ENCODE measurements at regions of chr13 and their contacts with region 1.

Region 1: DNA sequence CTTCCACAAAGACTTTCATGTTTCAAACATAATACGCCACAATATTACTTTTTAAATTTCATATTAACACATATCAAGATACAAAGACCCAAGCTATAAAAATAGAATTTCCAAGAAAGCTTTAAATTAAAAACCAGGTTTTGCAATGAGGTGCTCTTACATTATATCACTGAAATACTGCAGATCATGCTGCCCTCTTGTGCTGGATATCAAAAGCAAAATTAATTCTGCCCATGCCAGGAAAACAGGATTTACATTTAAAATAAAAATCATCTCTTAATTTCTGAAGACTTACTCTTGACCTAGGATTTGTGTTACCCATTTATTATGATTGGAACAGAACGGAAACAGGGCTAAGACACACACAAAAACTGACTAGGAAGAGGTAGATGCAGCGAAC is 145.0 kb downstream of the ABCC4 start:
- DNase-seq: peak; percentile 56
- ATAC-seq: no peak
- H3K4me3 ChIP-seq: no peak overlapping the region
- H3K27ac ChIP-seq: peak overlapping the region; percentile 98
- H3K4me1 ChIP-seq: peaks cover 33% of the 10 kb centered on the region
- H3K27me3 ChIP-seq: no peaks in the 10 kb centered on the region
- CTCF ChIP-seq: peak; percentile 75

Region 2: GRCh38 chr13:94660695-94661326 is 495.4 kb before region 1 on chr13:
- CTCF ChIA-PET with region 1: interaction called, 12 read pairs
- POLR2A ChIA-PET with region 1: no interaction called
- intact Hi-C with region 1: no loop called
- DNase-seq: peak; percentile 51
- ATAC-seq: no peak
- H3K4me3 ChIP-seq: no peak overlapping the region
- H3K27ac ChIP-seq: no peak overlapping the region
- H3K4me1 ChIP-seq: peaks cover 34% of the 10 kb centered on the region
- H3K27me3 ChIP-seq: no peaks in the 10 kb centered on the region
- CTCF ChIP-seq: peak; percentile 65

Region 3: GRCh38 chr13:94784066-94784465 is 372.1 kb before region 1 on chr13:
- CTCF ChIA-PET with region 1: no interaction called
- POLR2A ChIA-PET with region 1: interaction called, 3 read pairs
- intact Hi-C with region 1: loop called (anchors 10 kb)
- DNase-seq: no peak
- ATAC-seq: no peak
- H3K4me3 ChIP-seq: no peak overlapping the region
- H3K27ac ChIP-seq: no peak overlapping the region
- H3K4me1 ChIP-seq: peaks cover 26% of the 10 kb centered on the region
- H3K27me3 ChIP-seq: no peaks in the 10 kb centered on the region
- CTCF ChIP-seq: no peak

Region 4: GRCh38 chr13:95003019-95003813 is 153.0 kb before region 1 on chr13:
- CTCF ChIA-PET with region 1: no interaction called
- POLR2A ChIA-PET with region 1: no interaction called
- intact Hi-C with region 1: loop called (anchors 1 kb)
- DNase-seq: no peak
- ATAC-seq: no peak; the same call in 1 of the 2 replicates
- H3K4me3 ChIP-seq: no peak overlapping the region
- H3K27ac ChIP-seq: no peak overlapping the region
- H3K4me1 ChIP-seq: peaks cover 5% of the 10 kb centered on the region; the same call in 1 of the 2 replicates
- H3K27me3 ChIP-seq: no peaks in the 10 kb centered on the region
- CTCF ChIP-seq: no peak

Region 5: DNA sequence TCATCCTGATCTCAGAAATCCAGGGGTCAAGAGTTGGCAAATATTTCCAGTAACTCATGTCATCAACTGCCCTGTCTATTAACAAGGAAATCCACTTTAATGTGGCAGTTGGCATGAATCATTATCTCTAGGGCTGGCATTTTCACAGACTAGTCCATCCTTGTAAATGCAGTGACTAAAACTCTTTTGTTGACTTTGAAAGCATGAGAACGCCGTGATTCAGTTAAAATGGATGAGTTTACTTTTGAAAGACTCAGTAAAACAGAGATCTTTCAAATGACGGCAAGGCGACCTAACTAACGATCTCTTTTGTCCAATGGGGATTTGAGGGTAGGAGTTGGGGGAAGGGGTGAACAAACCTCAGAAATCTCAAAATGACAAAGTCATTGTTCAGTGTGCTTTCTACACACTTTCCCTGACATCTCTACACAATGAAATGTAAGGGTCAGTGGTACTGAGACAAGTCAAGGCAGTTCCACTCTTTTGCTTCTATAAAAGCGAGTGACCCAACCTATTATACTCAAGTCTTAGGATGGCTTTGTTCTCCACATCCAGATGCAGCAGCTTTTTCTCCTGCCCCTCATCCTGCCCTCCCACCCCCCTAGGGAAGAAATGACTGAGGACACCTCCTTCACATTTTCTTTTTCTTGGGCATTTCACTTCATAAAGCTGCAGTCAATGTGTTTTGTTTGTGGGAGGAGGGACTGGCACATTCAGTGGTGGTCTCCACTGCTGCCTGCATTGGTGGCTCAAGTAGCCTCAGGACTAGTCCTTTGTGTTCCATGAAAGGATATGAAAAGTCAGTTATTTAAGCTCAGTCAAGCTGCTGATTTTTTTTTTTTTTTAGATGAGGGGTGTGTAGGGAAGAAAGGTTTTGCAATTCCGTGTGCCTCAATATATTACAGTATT is 55.4 kb before region 1 on chr13:
- CTCF ChIA-PET with region 1: no interaction called
- POLR2A ChIA-PET with region 1: no interaction called
- intact Hi-C with region 1: loop called (anchors 1 kb)
- DNase-seq: peak; percentile 97
- ATAC-seq: peak; percentile 71
- H3K4me3 ChIP-seq: peak overlapping the region; percentile 39; the same call in 1 of the 2 replicates
- H3K27ac ChIP-seq: peak overlapping the region; percentile 100
- H3K4me1 ChIP-seq: peaks cover 37% of the 10 kb centered on the region
- H3K27me3 ChIP-seq: no peaks in the 10 kb centered on the region
- CTCF ChIP-seq: no peak

Region 6: GRCh38 chr13:95128045-95128643 is 28.1 kb before region 1 on chr13:
- CTCF ChIA-PET with region 1: no interaction called
- POLR2A ChIA-PET with region 1: no interaction called
- intact Hi-C with region 1: loop called (anchors 1 kb)
- DNase-seq: peak; percentile 83
- ATAC-seq: peak; percentile 88
- H3K4me3 ChIP-seq: peak overlapping the region; percentile 53
- H3K27ac ChIP-seq: peak overlapping the region; percentile 98
- H3K4me1 ChIP-seq: peaks cover 45% of the 10 kb centered on the region
- H3K27me3 ChIP-seq: no peaks in the 10 kb centered on the region
- CTCF ChIP-seq: no peak

Region 7: GRCh38 chr13:95323930-95324662 is 167.9 kb after region 1 on chr13:
- CTCF ChIA-PET with region 1: no interaction called
- POLR2A ChIA-PET with region 1: no interaction called
- intact Hi-C with region 1: no loop called
- DNase-seq: no peak
- ATAC-seq: no peak
- H3K4me3 ChIP-seq: no peak overlapping the region
- H3K27ac ChIP-seq: no peak overlapping the region
- H3K4me1 ChIP-seq: no peaks in the 10 kb centered on the region
- H3K27me3 ChIP-seq: no peaks in the 10 kb centered on the region
- CTCF ChIP-seq: no peak